Dendritic cell treated with granulocyte-macrophage colony-stimulating factor and Interleukin-4, amounts not matched to agents 40 ng/mL and 50 ng/mL, for 4 days (primary cell): ENCODE measurements at regions of chr11 and their contacts with region 1.

Region 1: GRCh38 chr11:85269107-85269506 is 358.0 kb downstream of the DLG2 start:
- H3K4me3 Mint-ChIP-seq: no peak overlapping the region
- H3K27ac Mint-ChIP-seq: no peak overlapping the region
- H3K4me1 Mint-ChIP-seq: peaks cover 21% of the 10 kb centered on the region
- H3K27me3 Mint-ChIP-seq: no peaks in the 10 kb centered on the region

Region 2: GRCh38 chr11:85052636-85053035 is 216.5 kb before region 1 on chr11:
- intact Hi-C with region 1: no loop called
- H3K4me3 Mint-ChIP-seq: no peak overlapping the region
- H3K27ac Mint-ChIP-seq: no peak overlapping the region
- H3K4me1 Mint-ChIP-seq: no peaks in the 10 kb centered on the region
- H3K27me3 Mint-ChIP-seq: no peaks in the 10 kb centered on the region

Region 3: GRCh38 chr11:85206957-85207356 is 62.1 kb before region 1 on chr11:
- intact Hi-C with region 1: loop called (anchors 10 kb)
- H3K4me3 Mint-ChIP-seq: no peak overlapping the region
- H3K27ac Mint-ChIP-seq: no peak overlapping the region
- H3K4me1 Mint-ChIP-seq: no peaks in the 10 kb centered on the region
- H3K27me3 Mint-ChIP-seq: no peaks in the 10 kb centered on the region

Region 4: GRCh38 chr11:85385547-85385946 is 116.4 kb after region 1 on chr11:
- intact Hi-C with region 1: loop called (anchors 10 kb)
- H3K4me3 Mint-ChIP-seq: no peak overlapping the region
- H3K27ac Mint-ChIP-seq: no peak overlapping the region
- H3K4me1 Mint-ChIP-seq: no peaks in the 10 kb centered on the region
- H3K27me3 Mint-ChIP-seq: no peaks in the 10 kb centered on the region